Endothelial cell of umbilical vein (primary cell): ENCODE measurements at regions of chr12 and their contacts with region 1.

Region 1: DNA sequence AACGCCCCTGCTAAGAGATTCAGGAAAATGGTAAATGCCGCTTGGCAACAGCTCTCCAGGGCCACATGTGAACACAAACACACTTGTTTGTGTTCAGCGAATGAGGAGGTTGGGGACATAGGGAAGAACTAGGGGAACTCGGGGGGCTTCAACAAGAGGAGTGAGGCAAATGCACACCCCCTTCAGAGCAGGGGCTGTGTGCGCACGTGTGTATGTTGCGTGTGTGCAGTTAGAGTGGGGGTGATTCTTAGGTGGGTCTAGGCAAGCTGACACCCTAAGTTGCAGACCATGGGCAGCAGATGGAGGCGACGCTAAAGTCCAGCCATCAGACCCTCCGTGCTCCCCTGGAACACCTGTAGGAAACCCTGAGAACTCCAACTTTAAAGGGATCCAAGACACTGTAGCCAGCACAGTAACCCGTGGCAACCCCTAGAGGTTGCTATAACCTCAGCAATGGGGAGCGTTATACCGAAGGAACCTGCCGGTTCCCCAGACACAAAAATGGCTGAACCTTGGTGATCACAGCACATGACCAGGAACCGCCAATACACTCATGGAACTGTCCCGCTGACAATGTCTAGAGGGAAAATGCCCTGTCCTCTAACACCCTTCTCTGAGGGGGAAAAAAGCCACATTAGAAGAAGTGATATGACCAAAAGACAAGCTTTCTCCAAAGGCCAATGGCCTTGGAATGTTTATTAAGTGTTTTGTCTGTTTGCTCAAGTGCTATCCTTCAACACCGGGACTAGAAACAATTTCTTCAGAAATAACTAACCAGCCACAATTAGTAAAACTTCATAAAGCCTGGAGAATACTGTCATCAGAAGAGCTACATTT is 86.5 kb upstream of the CEP83 start:
- DNase-seq: peak; percentile 76
- H3K4me3 ChIP-seq: no peak overlapping the region
- H3K27ac ChIP-seq: no peak overlapping the region
- H3K4me1 ChIP-seq: no peaks in the 10 kb centered on the region
- H3K27me3 ChIP-seq: no peaks in the 10 kb centered on the region
- CTCF ChIP-seq: peak; percentile 83 to 91
- POLR2A ChIP-seq: no peak

Region 2: GRCh38 chr12:94649349-94650142 is 103.4 kb after region 1 on chr12:
- CTCF ChIA-PET with region 1: interaction called, 7 read pairs
- POLR2A ChIA-PET with region 1: no interaction called
- dilution Hi-C with region 1: no loop called
- intact Hi-C with region 1: loop called (anchors 1 kb)
- DNase-seq: peak; percentile 64
- H3K4me3 ChIP-seq: peak overlapping the region; percentile 52 to 96 (median 87)
- H3K27ac ChIP-seq: peak overlapping the region; percentile 85
- H3K4me1 ChIP-seq: peaks cover 28% of the 10 kb centered on the region
- H3K27me3 ChIP-seq: no peaks in the 10 kb centered on the region
- CTCF ChIP-seq: peak; percentile 29 to 43
- POLR2A ChIP-seq: no peak

Region 3: GRCh38 chr12:94725375-94726168 is 179.4 kb after region 1 on chr12:
- CTCF ChIA-PET with region 1: interaction called, 4 read pairs
- POLR2A ChIA-PET with region 1: no interaction called
- dilution Hi-C with region 1: no loop called
- intact Hi-C with region 1: loop called (anchors 1 kb)
- DNase-seq: peak; percentile 71
- H3K4me3 ChIP-seq: no peak overlapping the region
- H3K27ac ChIP-seq: no peak overlapping the region
- H3K4me1 ChIP-seq: no peaks in the 10 kb centered on the region
- H3K27me3 ChIP-seq: no peaks in the 10 kb centered on the region
- CTCF ChIP-seq: peak; percentile 39 to 47
- POLR2A ChIP-seq: no peak

Region 4: GRCh38 chr12:94762259-94762942 is 216.2 kb after region 1 on chr12:
- CTCF ChIA-PET with region 1: interaction called, 9 read pairs
- POLR2A ChIA-PET with region 1: no interaction called
- dilution Hi-C with region 1: no loop called
- intact Hi-C with region 1: loop called (anchors 1 kb)
- DNase-seq: no peak
- H3K4me3 ChIP-seq: no peak overlapping the region
- H3K27ac ChIP-seq: peak overlapping the region; percentile 89
- H3K4me1 ChIP-seq: peaks cover 9% of the 10 kb centered on the region
- H3K27me3 ChIP-seq: no peaks in the 10 kb centered on the region
- CTCF ChIP-seq: no peak
- POLR2A ChIP-seq: no peak

Region 5: GRCh38 chr12:94898388-94898787 is 352.2 kb after region 1 on chr12:
- CTCF ChIA-PET with region 1: interaction called, 3 read pairs
- POLR2A ChIA-PET with region 1: no interaction called
- dilution Hi-C with region 1: no loop called
- intact Hi-C with region 1: loop called (anchors 1 kb)
- DNase-seq: peak; percentile 19
- H3K4me3 ChIP-seq: no peak overlapping the region
- H3K27ac ChIP-seq: no peak overlapping the region
- H3K4me1 ChIP-seq: no peaks in the 10 kb centered on the region
- H3K27me3 ChIP-seq: peaks cover 0 to 5% of the 10 kb centered on the region in 2 experiments
- CTCF ChIP-seq: peak in 1 of 2 donors; percentile 47
- POLR2A ChIP-seq: no peak

Region 6: GRCh38 chr12:95072900-95073697 is 526.9 kb after region 1 on chr12 and contains the start of gene NR2C1:
- CTCF ChIA-PET with region 1: interaction called, 7 read pairs
- POLR2A ChIA-PET with region 1: no interaction called
- dilution Hi-C with region 1: no loop called
- intact Hi-C with region 1: loop called (anchors 1 kb)
- DNase-seq: peak; percentile 91
- H3K4me3 ChIP-seq: peak within 1 kb of the TSS; percentile 72 to 88 (median 87)
- H3K27ac ChIP-seq: peak within 1 kb of the TSS; percentile 79
- H3K4me1 ChIP-seq: peaks cover 4% of the 10 kb centered on the region
- H3K27me3 ChIP-seq: no peaks in the 10 kb centered on the region
- CTCF ChIP-seq: no peak
- POLR2A ChIP-seq: peak; percentile 47
- total RNA-seq, gene NR2C1: 36.3 and 37.7 TPM in 2 replicates

Region 7: GRCh38 chr12:95336390-95337067 is 790.4 kb after region 1 on chr12:
- CTCF ChIA-PET with region 1: interaction called, 13 read pairs
- POLR2A ChIA-PET with region 1: no interaction called
- dilution Hi-C with region 1: no loop called
- intact Hi-C with region 1: loop called (anchors 1 kb)
- DNase-seq: peak; percentile 91
- H3K4me3 ChIP-seq: peak overlapping the region in 1 of 3 experiments; percentile 27
- H3K27ac ChIP-seq: peak overlapping the region; percentile 50
- H3K4me1 ChIP-seq: peaks cover 11% of the 10 kb centered on the region
- H3K27me3 ChIP-seq: no peaks in the 10 kb centered on the region
- CTCF ChIP-seq: peak; percentile 93 to 98
- POLR2A ChIP-seq: no peak